K562 (cell line): ENCODE measurements at regions of chr6 and their contacts with region 1.

Region 1: DNA sequence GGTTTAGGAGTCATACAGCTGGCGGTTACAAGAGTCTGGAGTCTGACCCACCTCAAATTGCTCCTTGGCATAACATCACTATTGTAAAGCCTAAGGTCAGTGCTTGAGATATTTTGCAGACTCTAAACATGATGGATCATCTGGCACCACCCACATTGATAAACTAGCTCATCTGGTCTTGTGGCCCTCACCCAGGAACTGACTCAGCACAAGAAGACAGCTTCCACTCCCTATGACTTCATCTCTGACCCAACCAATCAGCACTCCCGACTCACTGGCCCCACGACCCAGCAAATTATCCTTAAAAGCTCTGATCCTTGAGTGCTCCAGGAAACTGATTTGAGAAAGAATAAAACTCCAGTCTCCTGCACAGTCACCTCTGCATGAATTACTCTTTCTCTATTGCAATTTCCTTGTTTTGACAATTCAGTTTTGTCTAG is 115.9 kb downstream of the CD24 start:
- DNase-seq: peak in 2 of 4 experiments; percentile 42 to 82
- ATAC-seq: peak; percentile 82
- H3K4me3 ChIP-seq: no peak overlapping the region
- H3K27ac ChIP-seq: peak overlapping the region; percentile 80
- H3K4me1 ChIP-seq: peaks cover 0 to 30% of the 10 kb centered on the region in 2 experiments; a peak in 4 of 5 replicates
- H3K27me3 ChIP-seq: no peaks in the 10 kb centered on the region
- CTCF ChIP-seq: no peak
- EP300 ChIP-seq: peak; percentile 53; the same call in 1 of the 2 replicates
- POLR2A ChIP-seq: no peak
- RAD21 ChIP-seq: no peak

Region 2: DNA sequence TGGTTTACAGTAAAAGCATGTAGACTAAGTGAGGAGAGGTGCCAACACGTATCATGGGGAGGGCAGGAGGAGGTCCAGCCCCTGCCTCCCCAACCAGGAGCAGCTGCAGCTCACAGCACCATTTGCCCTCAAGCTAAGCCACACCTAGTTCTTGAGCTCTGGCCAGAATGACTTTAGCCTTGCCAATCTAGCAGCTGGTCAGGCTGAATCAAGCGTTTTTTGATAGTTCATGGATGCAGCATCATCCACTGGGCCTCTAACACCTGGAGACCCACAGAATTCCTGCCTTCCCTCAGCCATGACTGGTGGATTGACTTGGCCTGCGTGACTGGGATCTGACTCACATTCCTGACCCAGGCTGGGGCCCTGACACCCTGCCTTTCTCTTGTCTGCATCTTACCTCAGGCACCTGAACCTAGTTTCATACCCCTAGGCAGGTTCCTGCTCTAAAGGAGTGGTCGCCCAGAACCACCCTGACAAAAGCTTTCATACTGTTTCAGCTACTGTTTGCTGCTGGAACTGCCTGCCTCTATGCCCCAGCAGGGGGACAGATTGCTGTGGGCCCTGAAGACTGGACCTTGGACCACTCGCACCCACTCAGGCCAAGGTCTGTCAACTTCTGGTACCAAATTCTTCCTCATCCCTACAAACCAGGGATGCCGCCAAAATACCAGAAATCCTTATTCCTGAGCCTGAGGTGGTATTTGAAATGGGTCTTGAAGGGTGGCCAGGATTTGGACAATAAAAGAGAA is 107.0 kb before region 1 on chr6:
- CTCF ChIA-PET with region 1: no interaction called
- POLR2A ChIA-PET with region 1: no interaction called
- in situ Hi-C with region 1: no loop called
- intact Hi-C with region 1: loop called (anchors 10 kb)
- DNase-seq: no peak
- ATAC-seq: no peak
- H3K4me3 ChIP-seq: no peak overlapping the region
- H3K27ac ChIP-seq: no peak overlapping the region
- H3K4me1 ChIP-seq: no peaks in the 10 kb centered on the region
- H3K27me3 ChIP-seq: no peaks in the 10 kb centered on the region; a peak in 1 of 5 replicates
- CTCF ChIP-seq: no peak
- EP300 ChIP-seq: no peak
- POLR2A ChIP-seq: no peak
- RAD21 ChIP-seq: no peak

Region 3: DNA sequence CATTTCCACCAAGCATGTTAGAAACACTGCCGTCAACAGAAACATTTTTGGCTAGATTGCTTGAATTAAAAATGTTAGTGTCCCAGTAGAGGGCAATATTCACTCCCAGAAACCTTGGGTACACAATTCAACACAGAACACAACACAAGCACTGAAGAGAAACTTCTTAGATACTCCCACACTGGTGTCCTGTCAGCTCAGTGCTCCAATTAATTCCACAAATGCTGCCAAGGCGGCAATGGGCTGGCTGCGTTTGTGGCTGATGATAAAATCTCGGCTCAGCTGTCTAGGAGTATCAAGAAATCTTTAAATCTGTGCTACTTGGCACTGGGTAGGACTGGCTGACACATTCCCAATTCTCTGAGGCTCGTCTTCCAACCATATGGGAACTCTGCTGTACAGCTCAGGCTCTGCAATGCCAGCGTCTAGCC is 217.3 kb after region 1 on chr6:
- CTCF ChIA-PET with region 1: no interaction called
- POLR2A ChIA-PET with region 1: no interaction called
- in situ Hi-C with region 1: no loop called
- intact Hi-C with region 1: no loop called
- DNase-seq: no peak
- ATAC-seq: no peak
- H3K4me3 ChIP-seq: no peak overlapping the region
- H3K27ac ChIP-seq: no peak overlapping the region
- H3K4me1 ChIP-seq: peaks cover 0 to 3% of the 10 kb centered on the region in 2 experiments; a peak in 2 of 5 replicates
- H3K27me3 ChIP-seq: no peaks in the 10 kb centered on the region
- CTCF ChIP-seq: peak in 2 of 3 experiments; percentile 24 to 45; a peak in 2 of 6 replicates
- EP300 ChIP-seq: no peak
- POLR2A ChIP-seq: no peak
- RAD21 ChIP-seq: peak in 1 of 2 experiments; percentile 43; a peak in 2 of 4 replicates